ENCODE measurements at regions of chr1 and their contacts with region 1.

Region 1: GRCh38 chr1:3900119-3900968 is at the start of gene C1orf174:
- DNase-seq: peak; percentile 90 to 97
- H3K4me3 ChIP-seq: peak within 1 kb of the TSS; percentile 78 to 92 (median 84)
- H3K27ac ChIP-seq: peak within 1 kb of the TSS; percentile 98
- H3K4me1 ChIP-seq: peaks cover 0 to 12% (median 3%) of the 10 kb centered on the region in 4 experiments; a peak in 1 of 7 replicates
- H3K27me3 ChIP-seq: no peaks in the 10 kb centered on the region
- CTCF ChIP-seq: no peak
- EP300 ChIP-seq: no peak
- POLR2A ChIP-seq: peak; percentile 63 to 70; a peak in 2 of 3 replicates
- RAD21 ChIP-seq: no peak
- total RNA-seq, gene C1orf174: 28.4 and 28.5 TPM in 2 replicates

Region 2: GRCh38 chr1:3836421-3836820 is 63.9 kb before region 1 on chr1:
- CTCF ChIA-PET with region 1: no interaction called
- POLR2A ChIA-PET with region 1: no interaction called
- DNase-seq: no peak
- H3K4me3 ChIP-seq: no peak overlapping the region
- H3K27ac ChIP-seq: no peak overlapping the region
- H3K4me1 ChIP-seq: no peaks in the 10 kb centered on the region
- H3K27me3 ChIP-seq: no peaks in the 10 kb centered on the region
- CTCF ChIP-seq: no peak
- EP300 ChIP-seq: no peak
- POLR2A ChIP-seq: no peak
- RAD21 ChIP-seq: no peak

Region 3: GRCh38 chr1:3846541-3846940 is 53.8 kb before region 1 on chr1:
- CTCF ChIA-PET with region 1: no interaction called
- POLR2A ChIA-PET with region 1: no interaction called
- DNase-seq: no peak
- H3K4me3 ChIP-seq: no peak overlapping the region
- H3K27ac ChIP-seq: no peak overlapping the region
- H3K4me1 ChIP-seq: no peaks in the 10 kb centered on the region
- H3K27me3 ChIP-seq: no peaks in the 10 kb centered on the region
- CTCF ChIP-seq: no peak
- EP300 ChIP-seq: no peak
- POLR2A ChIP-seq: no peak
- RAD21 ChIP-seq: no peak

Region 4: GRCh38 chr1:3856908-3857790 is 43.2 kb before region 1 on chr1 and contains the starts of genes CEP104 and DFFB:
- CTCF ChIA-PET with region 1: interaction called, 9 read pairs
- POLR2A ChIA-PET with region 1: interaction called, 16 read pairs
- DNase-seq: peak; percentile 94 to 98
- H3K4me3 ChIP-seq: peak within 1 kb of the TSS; percentile 63 to 88 (median 86)
- H3K27ac ChIP-seq: no peak within 1 kb of the TSS
- H3K4me1 ChIP-seq: peaks cover 0 to 14% (median 8%) of the 10 kb centered on the region in 4 experiments; a peak in 5 of 7 replicates
- H3K27me3 ChIP-seq: peaks cover 0 to 3% (median 0%) of the 10 kb centered on the region in 4 experiments; a peak in 2 of 7 replicates
- CTCF ChIP-seq: peak; percentile 21 to 42 (median 29); a peak in 3 of 4 replicates
- EP300 ChIP-seq: no peak
- POLR2A ChIP-seq: no peak
- RAD21 ChIP-seq: peak; percentile 12 to 41; a peak in 3 of 4 replicates
- total RNA-seq, gene CEP104: 38.0 and 43.9 TPM in 2 replicates
- total RNA-seq, gene DFFB: 9.2 and 11.9 TPM in 2 replicates

Region 5: GRCh38 chr1:3968851-3969250 is 68.5 kb after region 1 on chr1:
- CTCF ChIA-PET with region 1: no interaction called
- POLR2A ChIA-PET with region 1: no interaction called
- DNase-seq: peak in 1 of 2 experiments; percentile 64
- H3K4me3 ChIP-seq: no peak overlapping the region
- H3K27ac ChIP-seq: no peak overlapping the region
- H3K4me1 ChIP-seq: no peaks in the 10 kb centered on the region
- H3K27me3 ChIP-seq: 0 out of 7 replicates have a peak, but pooled peaks cover 0 to 3% (median 0%) of the 10 kb centered on the region in 4 experiments
- CTCF ChIP-seq: no peak
- EP300 ChIP-seq: no peak
- POLR2A ChIP-seq: no peak
- RAD21 ChIP-seq: no peak